ENCODE measurements at regions of chr12 and their contacts with region 1.

Region 1: GRCh38 chr12:47651368-47652254 is 54.2 kb downstream of the RPAP3 start:
- DNase-seq: peak; percentile 23 to 34
- ATAC-seq: peak; percentile 83 to 91 (median 88)
- H3K4me3 ChIP-seq: peak overlapping the region in 4 of 10 donors; percentile 9 to 19 (median 12)
- H3K27ac ChIP-seq: peak overlapping the region in 1 of 10 donors; percentile 26
- H3K4me1 ChIP-seq: peaks cover 0 to 23% (median 13%) of the 10 kb centered on the region in 9 donors
- H3K27me3 ChIP-seq: no peaks in the 10 kb centered on the region
- CTCF ChIP-seq: peak; percentile 56 to 83 (median 74)

Region 2: DNA sequence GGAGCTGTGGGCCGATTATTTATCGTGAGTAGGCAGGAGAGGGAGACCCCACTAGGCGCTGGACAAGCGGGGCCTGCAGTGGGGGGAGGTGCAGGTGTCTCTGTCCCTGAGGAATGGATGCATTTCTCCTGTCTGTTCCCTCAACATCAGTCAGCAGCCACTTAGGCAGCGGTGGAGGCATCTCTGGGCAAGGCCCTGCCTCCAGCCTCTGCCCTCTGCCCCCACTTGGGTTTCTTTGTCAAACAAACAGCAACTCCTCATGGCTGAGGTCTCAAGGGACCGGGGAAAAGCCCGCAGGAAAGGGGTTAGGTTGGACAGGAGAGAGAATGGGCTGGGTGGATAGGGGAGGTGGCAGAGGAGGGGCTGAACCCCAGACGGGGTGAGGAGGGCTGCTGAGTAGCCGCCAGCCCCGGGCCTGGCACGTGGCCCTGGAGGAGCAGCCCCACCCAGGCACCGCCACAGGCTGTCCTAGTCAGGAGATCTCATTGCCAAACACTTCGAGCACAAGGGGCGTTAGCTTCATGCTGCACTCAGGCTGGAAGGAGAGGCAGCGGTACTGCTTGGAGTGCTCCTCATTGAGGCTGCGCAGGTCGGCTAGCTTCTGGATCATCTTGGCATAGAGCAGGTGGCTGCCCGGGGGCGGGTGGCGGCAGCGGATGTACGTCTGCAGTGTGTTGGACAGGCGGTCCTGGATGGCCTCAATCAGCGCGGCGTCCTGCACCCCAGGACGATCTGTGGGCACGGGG is 192.8 kb after region 1 on chr12:
- intact Hi-C with region 1: loop called in 2 of 10 experiments (anchors 5 kb)
- DNase-seq: no peak
- ATAC-seq: peak in 3 of 8 donors; percentile 16 to 45 (median 38)
- H3K4me3 ChIP-seq: no peak overlapping the region
- H3K27ac ChIP-seq: no peak overlapping the region
- H3K4me1 ChIP-seq: peaks cover 0 to 8% (median 0%) of the 10 kb centered on the region in 9 donors
- H3K27me3 ChIP-seq: no peaks in the 10 kb centered on the region
- CTCF ChIP-seq: no peak

Region 3: DNA sequence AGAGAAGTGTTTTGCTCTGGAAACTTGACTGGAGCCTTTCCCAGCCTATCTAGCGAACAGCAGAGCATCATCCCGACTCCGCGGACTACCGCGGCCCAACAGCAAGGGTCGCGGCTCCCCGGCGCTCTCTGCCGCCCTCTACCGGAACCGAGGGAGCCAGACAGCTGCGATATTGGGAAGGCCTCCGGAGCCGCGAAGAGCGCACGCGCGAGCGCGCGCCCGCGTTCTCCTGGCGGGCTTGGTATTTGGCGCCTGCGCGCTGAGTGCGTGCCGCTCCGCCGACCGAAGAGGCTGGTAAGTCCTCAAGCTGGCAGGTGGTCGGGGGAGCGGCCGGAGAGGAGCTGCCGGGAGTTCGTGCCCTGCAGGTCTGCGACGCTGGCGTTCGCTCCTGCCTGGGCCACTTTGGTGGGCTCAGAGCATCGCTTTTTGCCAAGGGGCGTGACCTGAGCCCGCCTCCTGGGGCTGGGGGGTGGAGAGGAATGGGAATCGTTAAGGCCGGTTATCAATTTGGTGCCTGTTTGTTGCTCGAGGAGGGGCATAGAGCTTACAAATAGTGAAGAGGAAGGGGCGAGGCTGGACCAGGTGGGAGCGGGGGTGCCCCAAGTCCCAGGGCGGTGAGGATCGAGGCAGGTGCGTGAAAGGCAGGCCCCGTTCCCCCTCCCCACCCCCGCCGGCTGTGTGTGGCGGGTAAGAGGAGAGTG is 311.9 kb after region 1 on chr12 and contains the start of gene TMEM106C:
- intact Hi-C with region 1: loop called in 1 of 10 experiments (anchors 10 kb)
- DNase-seq: peak; percentile 88 to 94
- ATAC-seq: peak; percentile 91 to 98 (median 96)
- H3K4me3 ChIP-seq: peak within 1 kb of the TSS; percentile 49 to 98 (median 84)
- H3K27ac ChIP-seq: peak within 1 kb of the TSS in 8 of 10 donors; percentile 28 to 76 (median 54)
- H3K4me1 ChIP-seq: peaks cover 0 to 49% (median 24%) of the 10 kb centered on the region in 9 donors
- H3K27me3 ChIP-seq: peaks cover 0 to 8% (median 0%) of the 10 kb centered on the region in 7 donors
- CTCF ChIP-seq: peak; percentile 94 to 100 (median 99)
- total RNA-seq, gene TMEM106C: 22.3 to 61.8 (median 40.0) TPM